Activated CD8-positive, alpha-beta memory T cell treated with anti-CD3 and anti-CD28 coated beads, Interleukin-2, amount 10 ng/mL, durations not matched to agents 7 days and 5 days (primary cell): ENCODE measurements at regions of chr15 and their contacts with region 1.

Region 1: GRCh38 chr15:38563723-38564519 is 693 bp downstream of the RASGRP1 start:
- DNase-seq: peak; percentile 91
- ATAC-seq: peak; percentile 75
- H3K4me3 Mint-ChIP-seq: peak overlapping the region; percentile 91
- H3K27ac Mint-ChIP-seq: peak overlapping the region; percentile 93
- H3K4me1 Mint-ChIP-seq: peaks cover 48% of the 10 kb centered on the region
- H3K27me3 Mint-ChIP-seq: no peaks in the 10 kb centered on the region

Region 2: DNA sequence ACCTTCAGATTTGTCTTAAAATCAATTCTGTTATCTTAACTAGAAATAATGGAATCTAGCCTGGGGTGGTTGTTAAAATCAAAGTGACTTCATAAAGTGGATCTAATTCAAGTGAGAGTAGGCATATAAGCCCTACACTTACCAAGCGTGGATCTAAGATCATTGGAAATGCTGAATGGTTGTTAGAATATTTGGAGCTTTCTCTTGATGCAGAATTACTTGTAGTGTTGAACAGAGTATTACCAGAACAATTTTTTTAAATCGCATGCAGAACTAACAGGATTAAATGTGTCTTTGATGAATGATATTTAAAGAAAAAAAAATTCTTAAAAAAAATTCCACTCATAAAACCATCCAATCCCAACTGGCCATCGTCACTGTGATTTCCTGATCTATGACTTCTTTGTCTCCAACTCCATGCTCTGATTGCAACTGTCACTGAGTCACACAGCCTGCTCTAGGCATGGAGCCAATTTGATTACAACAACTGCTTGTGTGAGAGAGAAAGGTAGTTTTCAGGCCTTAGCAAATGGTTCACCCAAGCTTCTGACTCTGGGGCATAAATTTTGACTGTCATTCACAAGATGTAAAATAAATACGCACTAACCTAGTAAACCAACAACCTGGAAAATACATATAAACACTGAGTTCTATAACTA is 337.2 kb before region 1 on chr15:
- CTCF ChIA-PET with region 1: no interaction called
- DNase-seq: no peak
- ATAC-seq: no peak
- H3K4me3 Mint-ChIP-seq: no peak overlapping the region
- H3K27ac Mint-ChIP-seq: no peak overlapping the region
- H3K4me1 Mint-ChIP-seq: no peaks in the 10 kb centered on the region
- H3K27me3 Mint-ChIP-seq: peaks cover 9% of the 10 kb centered on the region

Region 3: DNA sequence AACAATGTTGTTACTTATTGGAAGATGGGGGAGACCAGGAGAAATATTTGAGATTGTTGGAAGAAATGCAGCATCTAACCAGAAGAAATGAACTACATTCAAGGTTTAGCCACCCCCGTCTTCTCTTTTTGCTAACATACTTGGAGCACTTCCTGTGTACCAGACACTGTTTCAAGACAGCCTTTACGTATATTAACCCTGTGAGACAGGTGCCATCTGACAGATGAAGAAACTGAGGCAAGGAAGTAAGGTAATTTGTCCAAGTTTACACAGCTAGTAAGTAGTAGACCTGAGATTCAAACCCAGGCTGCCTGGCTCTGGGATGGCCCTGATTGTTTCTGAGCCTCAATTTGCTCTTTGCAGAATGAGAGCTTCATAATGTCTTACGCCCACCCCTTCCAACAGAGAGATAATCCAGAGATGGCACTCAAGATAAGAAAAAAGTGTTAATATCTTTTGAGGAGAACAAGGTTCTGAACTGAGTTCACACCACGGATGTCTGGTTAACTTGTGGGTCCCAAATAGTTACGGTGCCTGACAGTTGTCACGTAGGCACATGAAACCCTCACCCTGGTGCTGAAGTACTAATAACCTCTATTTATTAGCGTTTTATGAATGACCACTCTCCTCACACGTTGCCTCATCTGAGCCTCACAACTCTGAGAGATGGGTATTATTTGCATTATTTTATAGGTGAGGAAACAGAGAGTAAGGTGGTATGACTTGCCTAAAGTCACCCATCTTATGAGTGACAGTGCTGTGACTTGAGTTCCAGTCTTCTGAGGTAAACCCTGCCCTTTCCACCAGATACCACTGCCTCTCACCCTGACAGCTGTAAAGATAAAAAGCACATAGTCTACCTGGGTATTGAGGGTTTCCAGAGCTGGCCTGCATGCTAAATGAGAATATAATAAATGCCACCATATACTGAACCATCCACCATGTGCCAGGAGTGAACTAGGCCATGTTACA is 25.3 kb before region 1 on chr15:
- CTCF ChIA-PET with region 1: interaction called, 12 read pairs
- DNase-seq: peak; percentile 64
- ATAC-seq: peak; percentile 76
- H3K4me3 Mint-ChIP-seq: peak overlapping the region; percentile 47
- H3K27ac Mint-ChIP-seq: peak overlapping the region; percentile 85
- H3K4me1 Mint-ChIP-seq: peaks cover 90% of the 10 kb centered on the region
- H3K27me3 Mint-ChIP-seq: no peaks in the 10 kb centered on the region

Region 4: GRCh38 chr15:38610748-38611147 is 46.8 kb after region 1 on chr15:
- CTCF ChIA-PET with region 1: interaction called, 54 read pairs
- DNase-seq: peak; percentile 74
- ATAC-seq: peak; percentile 73
- H3K4me3 Mint-ChIP-seq: peak overlapping the region; percentile 53
- H3K27ac Mint-ChIP-seq: peak overlapping the region; percentile 93
- H3K4me1 Mint-ChIP-seq: peaks cover 67% of the 10 kb centered on the region
- H3K27me3 Mint-ChIP-seq: no peaks in the 10 kb centered on the region

Region 5: DNA sequence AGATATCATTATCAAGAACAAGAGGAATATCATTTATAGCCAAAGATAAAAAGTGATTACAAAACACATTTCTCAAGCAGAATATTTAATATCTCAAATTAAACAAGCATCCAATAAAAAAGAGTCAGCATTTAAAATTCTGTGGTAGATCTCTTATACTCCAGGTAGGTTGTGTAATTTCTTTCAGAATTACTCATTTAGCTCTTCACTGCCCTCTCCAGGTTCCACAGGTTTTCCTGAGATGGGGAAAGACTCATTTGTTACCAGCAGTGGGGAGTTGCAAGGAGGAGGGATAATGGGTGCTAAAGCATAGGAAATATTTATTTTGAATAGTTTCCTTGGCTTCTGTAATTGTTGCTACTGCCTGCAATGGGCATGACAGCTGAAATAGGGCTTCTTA is 83.8 kb after region 1 on chr15:
- CTCF ChIA-PET with region 1: interaction called, 168 read pairs
- DNase-seq: no peak
- ATAC-seq: no peak
- H3K4me3 Mint-ChIP-seq: no peak overlapping the region
- H3K27ac Mint-ChIP-seq: no peak overlapping the region
- H3K4me1 Mint-ChIP-seq: peaks cover 58% of the 10 kb centered on the region
- H3K27me3 Mint-ChIP-seq: no peaks in the 10 kb centered on the region

Region 6: GRCh38 chr15:38671675-38672254 is 107.8 kb after region 1 on chr15:
- CTCF ChIA-PET with region 1: interaction called, 100 read pairs
- DNase-seq: peak; percentile 56
- ATAC-seq: peak; percentile 31
- H3K4me3 Mint-ChIP-seq: peak overlapping the region; percentile 51
- H3K27ac Mint-ChIP-seq: peak overlapping the region; percentile 98
- H3K4me1 Mint-ChIP-seq: peaks cover 80% of the 10 kb centered on the region
- H3K27me3 Mint-ChIP-seq: no peaks in the 10 kb centered on the region

Region 7: DNA sequence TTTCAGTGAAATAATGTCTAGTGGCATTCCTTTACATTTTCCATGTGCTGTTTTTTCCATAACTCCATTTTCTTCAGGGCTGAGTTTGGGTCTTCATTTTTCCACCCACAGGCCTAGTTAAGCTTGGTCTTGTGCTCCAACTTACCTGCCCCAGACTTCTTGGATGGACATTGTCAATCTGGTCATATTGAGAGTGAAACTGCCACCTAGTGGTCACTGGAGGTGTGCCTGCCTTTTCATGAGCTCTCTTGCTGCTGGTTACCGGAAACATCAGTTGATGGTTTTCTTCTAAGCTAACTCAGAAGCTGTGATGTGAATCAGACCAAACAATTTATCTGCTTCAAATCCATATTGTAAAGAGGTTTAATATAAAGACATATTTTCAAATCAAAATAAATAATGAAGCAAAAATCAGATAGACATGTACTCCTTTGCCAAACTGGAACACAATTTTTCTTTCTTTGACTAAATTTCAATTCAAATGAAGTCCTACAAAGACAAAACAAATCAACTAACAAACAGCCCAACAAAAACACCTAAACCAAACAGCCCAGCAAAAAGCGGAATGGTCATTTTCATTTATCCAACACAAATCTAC is 135.8 kb after region 1 on chr15:
- CTCF ChIA-PET with region 1: interaction called, 68 read pairs
- DNase-seq: peak; percentile 89
- ATAC-seq: peak; percentile 35
- H3K4me3 Mint-ChIP-seq: peak overlapping the region; percentile 86
- H3K27ac Mint-ChIP-seq: peak overlapping the region; percentile 84
- H3K4me1 Mint-ChIP-seq: peaks cover 69% of the 10 kb centered on the region
- H3K27me3 Mint-ChIP-seq: no peaks in the 10 kb centered on the region

Region 8: DNA sequence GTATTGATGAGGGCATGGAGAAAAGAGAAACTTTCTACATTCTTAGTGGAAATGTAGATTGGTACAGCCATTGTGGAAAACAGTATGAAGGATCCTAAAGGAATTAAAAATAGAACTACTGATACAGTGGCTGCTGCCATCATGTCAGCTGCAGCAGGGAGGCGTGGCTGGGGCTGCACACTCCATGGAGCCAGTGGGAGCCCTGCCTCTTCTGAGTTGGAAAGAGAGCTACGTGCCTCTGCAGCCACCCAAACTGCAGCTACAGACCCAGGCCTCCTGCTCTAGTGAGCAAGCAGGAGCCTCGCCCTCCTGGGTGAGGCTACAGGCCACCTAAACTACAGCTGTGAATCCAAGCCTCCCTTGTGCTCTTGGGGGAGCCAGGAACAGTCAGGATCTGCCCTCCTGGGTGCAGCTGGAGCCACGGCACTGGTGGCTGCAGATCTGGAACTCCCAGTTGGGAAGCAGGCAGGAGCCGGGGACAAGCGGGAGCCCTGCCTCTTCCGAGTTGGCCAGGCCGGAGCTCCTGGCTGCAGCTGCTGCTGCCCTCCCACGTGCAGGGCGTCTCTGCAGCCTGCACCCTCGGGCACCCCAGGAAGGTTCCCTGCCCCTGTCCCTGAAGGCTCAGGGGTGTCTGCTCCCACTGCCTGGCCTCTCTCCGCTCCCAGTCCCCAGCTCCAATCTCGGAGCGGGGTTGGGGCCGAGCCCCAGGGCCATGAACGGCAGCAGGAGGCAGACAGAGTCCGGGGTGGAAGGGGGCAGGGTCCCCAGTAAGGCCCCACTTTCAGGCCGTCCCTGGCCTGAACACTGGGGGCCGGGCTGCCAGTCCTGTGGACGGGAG is 1081.4 kb after region 1 on chr15:
- CTCF ChIA-PET with region 1: no interaction called
- DNase-seq: no peak
- ATAC-seq: no peak
- H3K4me3 Mint-ChIP-seq: no peak overlapping the region
- H3K27ac Mint-ChIP-seq: no peak overlapping the region
- H3K4me1 Mint-ChIP-seq: peaks cover 37% of the 10 kb centered on the region
- H3K27me3 Mint-ChIP-seq: peaks cover 6% of the 10 kb centered on the region